IMR-90 (cell line): ENCODE measurements at regions of chr7 and their contacts with region 1.

Region 1: DNA sequence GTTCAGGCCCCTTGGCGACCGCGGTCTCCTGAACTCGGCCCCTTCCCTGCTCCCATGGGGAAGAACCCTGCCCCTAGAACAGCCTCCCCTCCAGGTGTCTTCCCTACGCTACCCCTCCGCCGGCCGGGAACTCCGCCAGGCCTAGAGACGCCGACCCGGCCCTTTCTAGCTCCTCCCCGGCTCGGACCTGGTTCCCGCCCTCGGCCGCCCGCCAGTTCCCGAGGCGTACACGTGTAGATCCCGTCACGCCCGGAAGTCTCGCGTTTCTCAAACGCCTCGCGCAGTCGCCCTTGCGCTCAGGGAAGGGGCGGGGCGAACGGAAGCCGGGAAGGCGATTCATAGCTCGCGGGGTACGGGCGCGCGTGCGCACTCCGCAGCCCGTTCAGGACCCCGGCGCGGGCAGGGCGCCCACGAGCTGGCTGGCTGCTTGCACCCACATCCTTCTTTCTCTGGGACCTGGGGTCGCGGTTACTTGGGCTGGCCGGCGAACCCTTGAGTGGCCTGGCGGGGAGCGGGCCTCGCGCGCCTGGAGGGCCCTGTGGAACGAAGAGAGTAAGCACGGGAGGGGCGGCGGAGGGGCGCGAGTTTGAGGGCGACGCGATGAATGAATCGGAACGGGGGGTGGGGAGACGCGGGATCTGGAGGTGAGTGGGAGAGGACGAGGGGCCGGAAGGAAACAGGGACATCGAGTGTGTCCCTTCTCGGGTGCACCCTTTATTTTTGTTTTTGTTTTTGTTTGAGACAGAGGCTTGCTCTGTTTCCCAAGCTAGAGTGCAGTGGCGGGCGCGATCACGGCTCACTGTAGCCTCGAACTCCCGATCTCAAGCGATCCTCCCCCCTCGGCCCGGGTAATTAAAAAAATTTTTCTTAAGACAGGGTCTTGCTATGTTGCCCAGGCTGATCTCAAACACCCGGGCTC is at the start of gene POP7:
- DNase-seq: peak; percentile 97
- ATAC-seq: peak; percentile 95
- H3K4me3 ChIP-seq: peak within 1 kb of the TSS; percentile 85
- H3K27ac ChIP-seq: peak within 1 kb of the TSS; percentile 83
- H3K4me1 ChIP-seq: peaks cover 4% of the 10 kb centered on the region; the same call in 1 of the 2 replicates
- H3K27me3 ChIP-seq: no peaks in the 10 kb centered on the region
- CTCF ChIP-seq: no peak
- POLR2A ChIP-seq: peak; percentile 60; the same call in 1 of the 2 replicates
- RAD21 ChIP-seq: no peak
- total RNA-seq, gene POP7: 14.9 and 16.9 TPM in 2 replicates

Region 2: GRCh38 chr7:100726996-100727761 is 21.2 kb after region 1 on chr7:
- CTCF ChIA-PET with region 1: interaction called, 6 read pairs
- POLR2A ChIA-PET with region 1: interaction called, 4 read pairs
- dilution Hi-C with region 1: no loop called
- in situ Hi-C with region 1: no loop called
- intact Hi-C with region 1: loop called (anchors 2 kb)
- DNase-seq: peak; percentile 61
- ATAC-seq: no peak
- H3K4me3 ChIP-seq: no peak overlapping the region
- H3K27ac ChIP-seq: no peak overlapping the region
- H3K4me1 ChIP-seq: peaks cover 9% of the 10 kb centered on the region
- H3K27me3 ChIP-seq: peaks cover 29% of the 10 kb centered on the region
- CTCF ChIP-seq: no peak
- POLR2A ChIP-seq: no peak
- RAD21 ChIP-seq: no peak

Region 3: DNA sequence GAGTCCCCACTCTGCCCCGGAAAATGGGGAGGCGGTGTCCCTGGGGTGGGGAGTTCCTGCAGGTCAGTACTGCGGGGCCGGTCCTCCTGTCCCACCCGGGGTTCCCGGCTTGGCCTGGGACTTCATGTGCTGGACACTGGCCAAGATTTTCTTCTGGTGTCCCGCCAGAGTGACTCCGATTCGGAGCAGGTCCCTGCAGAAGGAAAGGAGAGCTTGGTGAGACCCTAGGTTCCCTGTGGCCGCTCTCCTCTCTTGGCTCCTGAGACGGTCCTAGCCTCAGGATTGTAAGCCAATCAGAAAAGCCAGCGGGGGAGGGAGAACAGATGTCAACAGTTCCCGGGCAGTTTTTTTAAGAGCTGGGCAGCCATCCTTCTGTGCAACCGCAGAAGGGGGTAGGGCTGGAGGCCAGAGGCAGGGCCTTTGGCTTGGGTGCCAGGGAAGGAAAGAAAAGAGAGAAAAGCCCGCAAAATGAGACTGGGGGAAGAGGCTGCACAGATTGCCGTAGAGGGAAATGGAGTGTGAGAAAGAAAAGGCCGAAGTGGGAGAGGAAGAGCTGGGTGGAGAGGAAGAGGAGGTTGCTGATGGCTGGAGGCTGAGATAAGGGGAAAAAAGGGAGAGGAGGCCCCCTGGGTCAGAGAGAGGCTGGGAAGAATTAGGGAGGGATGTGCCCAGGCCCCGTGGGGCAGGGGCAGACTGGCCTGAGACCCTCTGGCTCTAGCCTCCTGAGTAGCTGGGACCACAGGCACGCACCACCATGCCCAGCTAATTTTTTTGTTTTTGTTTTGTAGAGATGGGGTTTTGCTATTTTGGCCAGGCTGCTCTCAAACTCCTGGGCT is 97.6 kb after region 1 on chr7:
- CTCF ChIA-PET with region 1: interaction called, 12 read pairs
- POLR2A ChIA-PET with region 1: no interaction called
- dilution Hi-C with region 1: no loop called
- in situ Hi-C with region 1: no loop called
- intact Hi-C with region 1: loop called (anchors 2 kb)
- DNase-seq: peak; percentile 83
- ATAC-seq: peak; percentile 85
- H3K4me3 ChIP-seq: no peak overlapping the region
- H3K27ac ChIP-seq: peak overlapping the region; percentile 70; the same call in 1 of the 2 replicates
- H3K4me1 ChIP-seq: peaks cover 18% of the 10 kb centered on the region
- H3K27me3 ChIP-seq: no peaks in the 10 kb centered on the region
- CTCF ChIP-seq: no peak
- POLR2A ChIP-seq: no peak
- RAD21 ChIP-seq: no peak

Region 4: GRCh38 chr7:100827330-100828227 is 121.6 kb after region 1 on chr7 and contains the start of gene EPHB4:
- CTCF ChIA-PET with region 1: interaction called, 6 read pairs
- POLR2A ChIA-PET with region 1: no interaction called
- dilution Hi-C with region 1: no loop called
- in situ Hi-C with region 1: loop called (anchors 10 kb)
- intact Hi-C with region 1: loop called (anchors 1 kb)
- DNase-seq: peak; percentile 86
- ATAC-seq: peak; percentile 91
- H3K4me3 ChIP-seq: peak within 1 kb of the TSS; percentile 83
- H3K27ac ChIP-seq: peak within 1 kb of the TSS; percentile 87
- H3K4me1 ChIP-seq: peaks cover 9% of the 10 kb centered on the region
- H3K27me3 ChIP-seq: no peaks in the 10 kb centered on the region
- CTCF ChIP-seq: peak; percentile 52
- POLR2A ChIP-seq: no peak
- RAD21 ChIP-seq: peak; percentile 35
- total RNA-seq, gene EPHB4: 35.0 and 36.4 TPM in 2 replicates

Region 5: GRCh38 chr7:100852048-100852872 is 146.2 kb after region 1 on chr7 and contains the start of gene SLC12A9:
- CTCF ChIA-PET with region 1: interaction called, 27 read pairs
- POLR2A ChIA-PET with region 1: no interaction called
- dilution Hi-C with region 1: no loop called
- in situ Hi-C with region 1: loop called (anchors 5 kb)
- intact Hi-C with region 1: loop called (anchors 1 kb)
- DNase-seq: peak; percentile 85
- ATAC-seq: peak; percentile 99
- H3K4me3 ChIP-seq: peak within 1 kb of the TSS; percentile 79
- H3K27ac ChIP-seq: peak within 1 kb of the TSS; percentile 41
- H3K4me1 ChIP-seq: no peaks in the 10 kb centered on the region
- H3K27me3 ChIP-seq: no peaks in the 10 kb centered on the region
- CTCF ChIP-seq: peak; percentile 95
- POLR2A ChIP-seq: 0 out of 2 replicates have a peak, but pooled peaks have one; percentile 18
- RAD21 ChIP-seq: peak; percentile 97
- total RNA-seq, gene SLC12A9: 3.3 and 4.5 TPM in 2 replicates

Region 6: GRCh38 chr7:101058355-101058754 is 352.3 kb after region 1 on chr7:
- CTCF ChIA-PET with region 1: no interaction called
- POLR2A ChIA-PET with region 1: no interaction called
- dilution Hi-C with region 1: no loop called
- in situ Hi-C with region 1: loop called (anchors 25 kb)
- intact Hi-C with region 1: no loop called
- DNase-seq: peak; percentile 50
- ATAC-seq: peak; percentile 74
- H3K4me3 ChIP-seq: no peak overlapping the region
- H3K27ac ChIP-seq: no peak overlapping the region
- H3K4me1 ChIP-seq: no peaks in the 10 kb centered on the region
- H3K27me3 ChIP-seq: peaks cover 25% of the 10 kb centered on the region
- CTCF ChIP-seq: no peak
- POLR2A ChIP-seq: no peak
- RAD21 ChIP-seq: no peak